A549 (cell line): ENCODE measurements at regions of chr6 and their contacts with region 1.

Region 1: DNA sequence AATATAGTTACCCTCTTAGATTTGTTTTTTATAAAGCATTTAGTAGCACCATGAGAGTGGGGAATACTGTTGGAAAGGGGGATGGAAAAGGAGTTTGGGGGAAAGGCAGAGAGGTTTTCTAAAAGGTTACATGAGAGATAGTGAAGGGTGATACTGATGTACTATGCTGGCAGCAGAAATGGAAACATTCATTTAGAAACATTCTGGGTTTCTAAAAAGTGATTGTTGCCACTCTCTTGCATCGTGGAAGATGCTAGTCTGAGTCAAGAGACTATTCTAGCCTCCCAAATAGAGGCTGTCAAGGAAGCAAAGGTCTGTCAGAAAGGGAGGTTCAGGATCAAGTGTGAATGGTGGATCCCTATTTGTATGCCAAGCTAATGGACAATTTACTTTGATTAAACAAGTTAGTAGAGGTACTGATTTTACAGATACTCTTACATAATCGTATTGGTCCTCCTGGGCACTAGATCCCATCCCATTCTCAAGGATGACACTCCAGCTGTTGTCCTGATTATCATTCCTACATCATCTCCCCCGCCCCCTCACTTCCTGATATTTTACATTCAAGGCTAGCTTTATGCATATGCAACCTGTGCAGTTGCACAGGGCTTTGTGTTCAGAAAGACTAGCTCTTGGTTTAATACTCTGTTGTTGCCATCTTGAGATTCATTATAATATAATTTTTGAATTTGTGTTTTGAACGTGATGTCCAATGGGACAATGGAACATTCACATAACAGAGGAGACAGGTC is 15.4 kb upstream of the ABT1 start:
- DNase-seq: no peak
- ATAC-seq: no peak
- H3K4me3 ChIP-seq: no peak overlapping the region
- H3K27ac ChIP-seq: no peak overlapping the region
- H3K4me1 ChIP-seq: no peaks in the 10 kb centered on the region
- CTCF ChIP-seq: no peak
- EP300 ChIP-seq: no peak
- POLR2A ChIP-seq: no peak
- RAD21 ChIP-seq: no peak

Region 2: GRCh38 chr6:26568601-26569432 is 12.5 kb before region 1 on chr6:
- CTCF ChIA-PET with region 1: interaction called, 11 read pairs
- POLR2A ChIA-PET with region 1: no interaction called
- DNase-seq: peak in 1 of 2 experiments; percentile 93
- ATAC-seq: peak; percentile 71 to 74
- H3K4me3 ChIP-seq: peak overlapping the region; percentile 66
- H3K27ac ChIP-seq: peak overlapping the region; percentile 53 to 86; a peak in 5 of 6 replicates
- H3K4me1 ChIP-seq: peaks cover 6% of the 10 kb centered on the region; the same call in 1 of the 3 replicates
- CTCF ChIP-seq: peak; percentile 41
- EP300 ChIP-seq: no peak
- POLR2A ChIP-seq: no peak
- RAD21 ChIP-seq: peak; percentile 61 to 68

Region 3: GRCh38 chr6:27091661-27092646 is 510.6 kb after region 1 on chr6:
- CTCF ChIA-PET with region 1: no interaction called
- POLR2A ChIA-PET with region 1: no interaction called
- DNase-seq: peak; percentile 72 to 88
- ATAC-seq: peak; percentile 99
- H3K4me3 ChIP-seq: peak overlapping the region; percentile 51
- H3K27ac ChIP-seq: peak overlapping the region; percentile 10 to 71; a peak in 4 of 6 replicates
- H3K4me1 ChIP-seq: peaks cover 12% of the 10 kb centered on the region
- CTCF ChIP-seq: no peak
- EP300 ChIP-seq: no peak
- POLR2A ChIP-seq: no peak
- RAD21 ChIP-seq: no peak